Naive thymus-derived CD4-positive, alpha-beta T cell (primary cell): ENCODE measurements at regions of chr2 and their contacts with region 1.

Region 1: DNA sequence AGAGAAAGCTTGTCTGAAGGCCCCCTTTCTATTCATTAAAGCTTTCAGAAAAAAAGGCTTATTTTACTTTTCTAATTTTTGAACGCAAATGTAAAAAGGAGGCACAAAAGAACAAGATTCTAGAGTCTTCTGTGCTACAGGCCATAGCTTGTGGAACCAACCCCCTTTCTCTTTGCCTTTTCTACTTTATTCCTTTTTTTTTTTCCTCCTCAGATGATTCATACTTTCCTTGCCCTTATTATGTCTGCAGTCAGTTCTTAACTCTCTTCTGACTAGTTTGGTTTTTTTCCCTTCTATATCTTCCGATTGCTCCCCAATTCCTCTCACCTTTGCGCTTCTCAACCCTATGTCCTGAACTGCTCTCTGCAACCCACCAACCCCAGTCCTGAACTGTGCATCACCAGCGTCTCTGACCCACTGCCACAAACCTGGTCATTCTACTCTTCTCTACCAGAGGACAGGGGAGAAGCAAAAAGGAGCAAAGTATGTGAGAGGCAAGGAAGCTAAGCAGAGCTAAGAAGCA is 56.9 kb upstream of the WIPF1 start:
- DNase-seq: no peak
- ATAC-seq: no peak
- H3K4me3 ChIP-seq: no peak overlapping the region
- H3K4me3 Mint-ChIP-seq: no peak overlapping the region
- H3K27ac ChIP-seq: no peak overlapping the region
- H3K27ac Mint-ChIP-seq: peak overlapping the region in 3 of 9 donors; percentile 26 to 76 (median 29)
- H3K4me1 ChIP-seq: peaks cover 0 to 6% of the 10 kb centered on the region in 2 donors
- H3K4me1 Mint-ChIP-seq: peaks cover 20 to 49% (median 41%) of the 10 kb centered on the region in 7 donors
- H3K27me3 ChIP-seq: no peaks in the 10 kb centered on the region
- H3K27me3 Mint-ChIP-seq: no peaks in the 10 kb centered on the region

Region 2: GRCh38 chr2:174247474-174248186 is 406.9 kb before region 1 on chr2:
- CTCF ChIA-PET with region 1: no interaction called
- POLR2A ChIA-PET with region 1: no interaction called
- intact Hi-C with region 1: no loop called
- DNase-seq: peak in 3 of 9 donors; percentile 4 to 8 (median 4)
- ATAC-seq: no peak
- H3K4me3 ChIP-seq: peak overlapping the region; percentile 90
- H3K4me3 Mint-ChIP-seq: peak overlapping the region; percentile 71 to 88 (median 86)
- H3K27ac ChIP-seq: peak overlapping the region; percentile 82
- H3K27ac Mint-ChIP-seq: peak overlapping the region; percentile 41 to 91 (median 67)
- H3K4me1 ChIP-seq: peaks cover 6 to 12% of the 10 kb centered on the region in 2 donors
- H3K4me1 Mint-ChIP-seq: peaks cover 18 to 33% (median 27%) of the 10 kb centered on the region in 7 donors
- H3K27me3 ChIP-seq: no peaks in the 10 kb centered on the region
- H3K27me3 Mint-ChIP-seq: peaks cover 0 to 5% (median 0%) of the 10 kb centered on the region in 5 donors

Region 3: DNA sequence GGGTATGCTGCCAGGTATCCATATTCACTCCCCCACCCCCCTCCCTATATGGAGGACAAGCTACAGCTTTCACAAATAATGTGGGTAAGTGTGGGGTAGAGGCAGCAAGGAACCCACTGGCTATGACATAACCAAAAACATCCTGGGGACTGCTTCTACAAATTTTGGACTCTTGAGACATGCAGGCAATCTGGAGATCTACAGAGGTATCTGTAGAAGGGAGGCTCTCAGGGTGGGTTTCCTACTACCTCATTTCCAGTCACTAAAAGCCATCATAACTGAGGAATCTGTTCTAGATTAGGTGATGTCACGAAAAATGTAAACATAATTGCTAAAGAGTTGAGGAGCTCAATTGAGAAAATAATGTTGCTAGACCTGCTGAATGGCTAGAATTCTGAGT is 10.1 kb before region 1 on chr2:
- CTCF ChIA-PET with region 1: no interaction called
- POLR2A ChIA-PET with region 1: interaction called, 6 read pairs
- intact Hi-C with region 1: loop called (anchors 2 kb)
- DNase-seq: no peak
- ATAC-seq: no peak
- H3K4me3 ChIP-seq: no peak overlapping the region
- H3K4me3 Mint-ChIP-seq: no peak overlapping the region
- H3K27ac ChIP-seq: no peak overlapping the region
- H3K27ac Mint-ChIP-seq: peak overlapping the region in 1 of 9 donors; percentile 3
- H3K4me1 ChIP-seq: no peaks in the 10 kb centered on the region
- H3K4me1 Mint-ChIP-seq: peaks cover 2 to 34% (median 16%) of the 10 kb centered on the region in 7 donors
- H3K27me3 ChIP-seq: no peaks in the 10 kb centered on the region
- H3K27me3 Mint-ChIP-seq: no peaks in the 10 kb centered on the region

Region 4: GRCh38 chr2:174682578-174683391 is 28.3 kb after region 1 on chr2:
- CTCF ChIA-PET with region 1: interaction called, 6 read pairs
- POLR2A ChIA-PET with region 1: no interaction called
- intact Hi-C with region 1: loop called in 1 of 2 experiments (anchors 2 kb)
- DNase-seq: peak; percentile 56 to 73 (median 71)
- ATAC-seq: peak; percentile 78
- H3K4me3 ChIP-seq: peak overlapping the region; percentile 72
- H3K4me3 Mint-ChIP-seq: peak overlapping the region; percentile 92 to 99 (median 96)
- H3K27ac ChIP-seq: peak overlapping the region; percentile 88
- H3K27ac Mint-ChIP-seq: peak overlapping the region; percentile 91 to 98 (median 96)
- H3K4me1 ChIP-seq: peaks cover 11% of the 10 kb centered on the region in 2 donors
- H3K4me1 Mint-ChIP-seq: peaks cover 34 to 69% (median 61%) of the 10 kb centered on the region in 7 donors
- H3K27me3 ChIP-seq: no peaks in the 10 kb centered on the region
- H3K27me3 Mint-ChIP-seq: no peaks in the 10 kb centered on the region

Region 5: DNA sequence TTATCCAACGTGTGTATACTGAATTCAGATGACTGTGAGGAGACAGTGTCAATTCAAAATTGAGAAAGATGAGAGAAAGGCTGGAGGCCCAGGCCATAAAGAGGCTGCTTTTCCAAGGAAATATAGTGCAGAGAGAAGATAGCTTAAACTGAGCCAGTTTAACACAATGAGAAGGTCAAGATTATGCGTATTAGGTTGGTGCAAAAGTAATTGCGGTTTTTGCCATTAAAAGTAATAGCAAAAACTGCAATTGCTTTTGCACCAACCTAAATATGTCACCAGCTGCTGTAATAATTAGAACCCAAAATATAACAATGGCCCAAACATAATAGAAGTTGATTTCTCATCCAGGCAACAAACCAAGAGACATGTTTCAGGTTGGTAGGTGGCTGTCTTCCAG is 675.7 kb after region 1 on chr2:
- CTCF ChIA-PET with region 1: no interaction called
- POLR2A ChIA-PET with region 1: no interaction called
- intact Hi-C with region 1: no loop called
- DNase-seq: no peak
- ATAC-seq: no peak
- H3K4me3 ChIP-seq: no peak overlapping the region
- H3K4me3 Mint-ChIP-seq: no peak overlapping the region
- H3K27ac ChIP-seq: no peak overlapping the region
- H3K27ac Mint-ChIP-seq: no peak overlapping the region
- H3K4me1 ChIP-seq: no peaks in the 10 kb centered on the region
- H3K4me1 Mint-ChIP-seq: no peaks in the 10 kb centered on the region
- H3K27me3 ChIP-seq: peaks cover 0 to 2% of the 10 kb centered on the region in 2 donors
- H3K27me3 Mint-ChIP-seq: peaks cover 0 to 5% (median 2%) of the 10 kb centered on the region in 5 donors